Activated CD4-positive, alpha-beta T cell treated with anti-CD3 and anti-CD28 coated beads, Interleukin-2, amount 10 ng/mL, durations not matched to agents 24 days and 14 days (primary cell): ENCODE measurements at regions of chr2 and their contacts with region 1.

Region 1: GRCh38 chr2:42296226-42296625 is 64.8 kb downstream of the COX7A2L start:
- DNase-seq: no peak
- H3K4me3 Mint-ChIP-seq: no peak overlapping the region
- H3K27ac Mint-ChIP-seq: peak overlapping the region; percentile 15
- H3K4me1 Mint-ChIP-seq: peaks cover 36% of the 10 kb centered on the region
- H3K27me3 Mint-ChIP-seq: no peaks in the 10 kb centered on the region

Region 2: DNA sequence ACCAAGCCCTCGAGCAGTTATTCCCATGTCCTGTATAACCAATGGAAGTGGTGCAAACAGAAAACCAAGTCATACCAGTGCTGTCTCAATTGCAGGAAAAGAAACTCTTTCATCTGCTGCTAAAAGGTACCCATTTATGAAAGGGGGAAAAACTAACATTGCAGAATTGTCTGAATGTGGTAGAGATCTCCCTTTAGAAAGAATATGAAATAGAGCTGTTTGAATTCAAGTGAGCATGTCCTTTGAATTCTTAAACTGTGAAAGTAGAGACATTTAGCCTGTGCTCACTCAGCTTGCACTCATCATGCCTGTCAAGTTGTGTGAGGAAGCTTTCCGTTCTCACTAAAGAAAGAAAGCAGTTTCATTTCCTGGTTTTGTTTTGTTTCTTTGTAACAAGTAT is 39.7 kb before region 1 on chr2:
- intact Hi-C with region 1: loop called (anchors 5 kb)
- DNase-seq: peak; percentile 62
- H3K4me3 Mint-ChIP-seq: peak overlapping the region; percentile 64
- H3K27ac Mint-ChIP-seq: peak overlapping the region; percentile 70
- H3K4me1 Mint-ChIP-seq: peaks cover 33% of the 10 kb centered on the region
- H3K27me3 Mint-ChIP-seq: no peaks in the 10 kb centered on the region